GM12878 (cell line): ENCODE measurements at regions of chr9 and their contacts with region 1.

Region 1: GRCh38 chr9:99162759-99163364 is 57.9 kb downstream of the TGFBR1 start:
- DNase-seq: no peak
- ATAC-seq: peak; percentile 72
- H3K4me3 ChIP-seq: no peak overlapping the region
- H3K27ac ChIP-seq: no peak overlapping the region
- H3K4me1 ChIP-seq: peaks cover 12% of the 10 kb centered on the region
- H3K27me3 ChIP-seq: no peaks in the 10 kb centered on the region
- CTCF ChIP-seq: peak; percentile 49 to 81 (median 65); a peak in 5 of 6 replicates
- EP300 ChIP-seq: no peak
- POLR2A ChIP-seq: no peak
- RAD21 ChIP-seq: peak; percentile 94

Region 2: DNA sequence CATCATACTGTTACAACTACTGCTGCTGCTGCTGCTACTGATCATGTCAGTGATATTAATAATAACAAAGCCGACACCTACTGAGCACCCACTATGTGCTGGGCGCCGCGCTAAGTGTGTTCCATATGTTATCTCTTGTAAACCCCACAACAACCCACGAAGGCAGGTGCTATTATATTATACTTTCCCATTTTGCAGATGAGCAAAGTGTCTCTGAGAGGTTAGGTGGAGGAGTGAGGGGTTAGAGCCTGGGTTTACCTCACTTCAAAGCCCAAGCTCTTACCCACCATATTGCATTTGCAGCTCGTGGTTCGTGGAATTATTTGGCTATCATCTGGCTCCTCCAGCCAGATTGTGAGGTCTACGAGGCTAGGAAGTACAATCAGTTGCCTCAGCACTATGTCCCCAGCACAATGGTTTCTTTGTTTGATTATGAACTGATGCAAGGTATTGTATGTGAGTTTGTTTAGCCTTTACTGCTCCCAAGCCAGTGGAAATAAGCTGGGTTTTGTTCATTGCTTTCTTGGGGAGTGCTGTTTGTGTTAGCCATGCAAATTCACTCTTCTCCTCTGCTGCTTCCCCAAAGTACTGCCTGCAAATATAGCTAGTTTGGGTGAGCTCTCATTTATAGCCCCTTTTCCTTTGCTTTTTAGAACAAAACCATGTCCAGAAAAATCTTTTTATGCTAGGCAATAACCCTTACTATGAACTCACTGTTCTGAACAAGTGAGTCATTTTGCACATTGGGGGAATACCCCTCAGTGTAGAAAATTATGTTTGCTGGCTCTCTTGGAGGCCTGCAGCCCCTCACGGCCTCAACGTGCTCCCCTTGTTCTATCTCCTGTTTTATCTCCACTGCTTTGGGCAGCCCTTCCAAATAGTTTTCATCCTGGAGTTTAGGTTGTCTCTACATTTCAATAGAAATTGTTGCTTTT is 11.0 kb after region 1 on chr9:
- CTCF ChIA-PET with region 1: interaction called, 75 read pairs
- POLR2A ChIA-PET with region 1: interaction called, 6 read pairs
- RAD21 ChIA-PET with region 1: interaction called, 147 read pairs
- SMC1A ChIA-PET with region 1: interaction called, 60 read pairs
- in situ Hi-C with region 1: no loop called
- intact Hi-C with region 1: no loop called
- DNase-seq: no peak
- ATAC-seq: peak; percentile 81
- H3K4me3 ChIP-seq: no peak overlapping the region
- H3K27ac ChIP-seq: no peak overlapping the region
- H3K4me1 ChIP-seq: peaks cover 8% of the 10 kb centered on the region
- H3K27me3 ChIP-seq: no peaks in the 10 kb centered on the region
- CTCF ChIP-seq: no peak
- EP300 ChIP-seq: no peak
- POLR2A ChIP-seq: no peak
- RAD21 ChIP-seq: no peak

Region 3: GRCh38 chr9:99266255-99267023 is 103.6 kb after region 1 on chr9:
- CTCF ChIA-PET with region 1: interaction called, 8 read pairs
- POLR2A ChIA-PET with region 1: interaction called, 3 read pairs
- RAD21 ChIA-PET with region 1: interaction called, 6 read pairs
- SMC1A ChIA-PET with region 1: interaction called, 24 read pairs
- in situ Hi-C with region 1: no loop called
- intact Hi-C with region 1: no loop called
- DNase-seq: peak; percentile 48
- ATAC-seq: peak; percentile 82
- H3K4me3 ChIP-seq: no peak overlapping the region
- H3K27ac ChIP-seq: peak overlapping the region; percentile 57; the same call in 1 of the 2 replicates
- H3K4me1 ChIP-seq: peaks cover 40% of the 10 kb centered on the region
- H3K27me3 ChIP-seq: no peaks in the 10 kb centered on the region
- CTCF ChIP-seq: peak; percentile 90 to 97 (median 93); a peak in 5 of 6 replicates
- EP300 ChIP-seq: no peak
- POLR2A ChIP-seq: no peak
- RAD21 ChIP-seq: peak; percentile 92

Region 4: GRCh38 chr9:99660191-99660708 is 497.4 kb after region 1 on chr9:
- CTCF ChIA-PET with region 1: no interaction called
- POLR2A ChIA-PET with region 1: no interaction called
- RAD21 ChIA-PET with region 1: no interaction called
- SMC1A ChIA-PET with region 1: no interaction called
- in situ Hi-C with region 1: no loop called
- intact Hi-C with region 1: no loop called
- DNase-seq: peak; percentile 78
- ATAC-seq: peak; percentile 97
- H3K4me3 ChIP-seq: no peak overlapping the region
- H3K27ac ChIP-seq: no peak overlapping the region
- H3K4me1 ChIP-seq: peaks cover 14% of the 10 kb centered on the region
- H3K27me3 ChIP-seq: no peaks in the 10 kb centered on the region
- CTCF ChIP-seq: no peak
- EP300 ChIP-seq: peak; percentile 98 to 99; a peak in 3 of 4 replicates
- POLR2A ChIP-seq: 0 out of 2 replicates have a peak, but pooled peaks have one; percentile 21
- RAD21 ChIP-seq: no peak

Region 5: DNA sequence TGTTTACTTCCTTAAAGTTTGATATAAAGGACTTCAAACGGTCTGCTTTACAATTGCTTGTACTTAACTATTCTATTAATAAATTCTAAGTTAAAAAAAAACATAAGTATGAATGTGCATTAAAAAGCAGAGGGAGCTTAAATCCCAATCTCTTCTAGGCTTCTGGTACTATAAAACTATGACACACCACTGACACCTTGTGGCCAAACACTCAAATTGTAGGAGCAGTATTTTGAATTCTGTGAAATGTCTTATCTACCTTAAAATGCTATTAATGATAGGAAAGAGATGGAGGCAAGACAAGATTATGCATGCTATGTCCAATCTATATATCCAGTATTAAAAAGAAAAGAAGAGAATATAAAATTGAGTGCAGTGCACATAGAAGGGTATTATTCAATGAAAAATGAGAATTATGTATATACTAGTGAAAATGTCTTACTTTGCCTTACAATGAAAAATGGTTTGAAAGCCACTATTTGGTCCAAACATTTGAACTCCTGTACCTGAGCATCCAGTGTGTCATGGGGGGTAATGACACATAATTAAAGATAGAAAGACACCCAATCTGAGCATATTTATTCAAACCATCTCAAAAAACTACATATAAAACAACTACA is 848.3 kb after region 1 on chr9:
- CTCF ChIA-PET with region 1: interaction called, 13 read pairs
- POLR2A ChIA-PET with region 1: no interaction called
- RAD21 ChIA-PET with region 1: interaction called, 3 read pairs
- SMC1A ChIA-PET with region 1: interaction called, 3 read pairs
- in situ Hi-C with region 1: no loop called
- intact Hi-C with region 1: loop called (anchors 5 kb)
- DNase-seq: peak; percentile 38
- ATAC-seq: peak; percentile 73
- H3K4me3 ChIP-seq: no peak overlapping the region
- H3K27ac ChIP-seq: no peak overlapping the region
- H3K4me1 ChIP-seq: no peaks in the 10 kb centered on the region
- H3K27me3 ChIP-seq: no peaks in the 10 kb centered on the region
- CTCF ChIP-seq: peak; percentile 48 to 58 (median 56)
- EP300 ChIP-seq: no peak
- POLR2A ChIP-seq: no peak
- RAD21 ChIP-seq: peak; percentile 76

Region 6: GRCh38 chr9:100317706-100318105 is 1154.8 kb after region 1 on chr9:
- CTCF ChIA-PET with region 1: interaction called, 6 read pairs
- POLR2A ChIA-PET with region 1: no interaction called
- RAD21 ChIA-PET with region 1: interaction called, 5 read pairs
- SMC1A ChIA-PET with region 1: interaction called, 3 read pairs
- in situ Hi-C with region 1: loop called (anchors 10 kb)
- intact Hi-C with region 1: loop called (anchors 5 kb)
- DNase-seq: no peak
- ATAC-seq: no peak
- H3K4me3 ChIP-seq: no peak overlapping the region
- H3K27ac ChIP-seq: no peak overlapping the region
- H3K4me1 ChIP-seq: no peaks in the 10 kb centered on the region
- H3K27me3 ChIP-seq: no peaks in the 10 kb centered on the region
- CTCF ChIP-seq: no peak
- EP300 ChIP-seq: no peak
- POLR2A ChIP-seq: no peak
- RAD21 ChIP-seq: no peak

Region 7: GRCh38 chr9:100437860-100438805 is 1275.3 kb after region 1 on chr9:
- CTCF ChIA-PET with region 1: interaction called, 5 read pairs
- POLR2A ChIA-PET with region 1: no interaction called
- RAD21 ChIA-PET with region 1: no interaction called
- SMC1A ChIA-PET with region 1: no interaction called
- in situ Hi-C with region 1: loop called (anchors 10 kb)
- intact Hi-C with region 1: no loop called
- DNase-seq: no peak
- ATAC-seq: peak; percentile 83
- H3K4me3 ChIP-seq: no peak overlapping the region
- H3K27ac ChIP-seq: no peak overlapping the region
- H3K4me1 ChIP-seq: no peaks in the 10 kb centered on the region
- H3K27me3 ChIP-seq: no peaks in the 10 kb centered on the region
- CTCF ChIP-seq: peak; percentile 88 to 92 (median 91)
- EP300 ChIP-seq: no peak
- POLR2A ChIP-seq: no peak
- RAD21 ChIP-seq: peak; percentile 61